ENCODE measurements at regions of chr5 and their contacts with region 1.

Region 1: DNA sequence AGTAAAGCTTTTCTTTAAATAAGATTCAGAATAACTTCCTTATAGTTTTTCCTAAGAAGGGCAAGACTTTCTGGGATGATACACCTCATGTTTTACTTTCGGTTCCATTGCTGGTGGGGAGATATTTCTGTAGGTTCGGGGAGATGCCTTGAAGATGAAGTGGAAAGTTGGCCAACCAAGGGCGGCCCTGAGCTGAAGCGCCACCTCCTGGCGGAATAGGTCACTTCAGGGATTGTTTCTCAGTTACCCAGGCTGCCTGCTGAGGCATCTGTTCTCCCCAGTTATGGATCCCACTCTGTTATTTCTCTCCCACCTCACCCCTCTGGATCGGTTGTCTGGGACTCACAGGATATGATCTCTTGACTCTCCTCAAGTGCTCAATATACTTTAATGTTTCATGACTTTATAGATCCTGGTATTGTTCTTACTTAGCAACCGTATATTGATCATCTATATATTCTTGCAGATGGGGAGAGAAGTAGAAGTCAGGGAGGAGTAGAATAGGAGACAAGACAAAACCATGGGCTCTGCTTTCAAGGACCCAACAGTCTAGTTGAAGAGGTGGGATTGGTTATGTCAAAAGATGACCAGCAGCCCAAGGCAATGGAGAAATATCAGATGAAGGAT is 23.4 kb downstream of the MEGF10 start:
- DNase-seq: peak; percentile 87
- H3K4me3 ChIP-seq: no peak overlapping the region
- H3K27ac ChIP-seq: no peak overlapping the region
- H3K4me1 ChIP-seq: peaks cover 0 to 11% (median 0%) of the 10 kb centered on the region in 6 donors
- H3K27me3 ChIP-seq: no peaks in the 10 kb centered on the region
- CTCF ChIP-seq: peak; percentile 26 to 82 (median 71)
- POLR2A ChIP-seq: no peak

Region 2: DNA sequence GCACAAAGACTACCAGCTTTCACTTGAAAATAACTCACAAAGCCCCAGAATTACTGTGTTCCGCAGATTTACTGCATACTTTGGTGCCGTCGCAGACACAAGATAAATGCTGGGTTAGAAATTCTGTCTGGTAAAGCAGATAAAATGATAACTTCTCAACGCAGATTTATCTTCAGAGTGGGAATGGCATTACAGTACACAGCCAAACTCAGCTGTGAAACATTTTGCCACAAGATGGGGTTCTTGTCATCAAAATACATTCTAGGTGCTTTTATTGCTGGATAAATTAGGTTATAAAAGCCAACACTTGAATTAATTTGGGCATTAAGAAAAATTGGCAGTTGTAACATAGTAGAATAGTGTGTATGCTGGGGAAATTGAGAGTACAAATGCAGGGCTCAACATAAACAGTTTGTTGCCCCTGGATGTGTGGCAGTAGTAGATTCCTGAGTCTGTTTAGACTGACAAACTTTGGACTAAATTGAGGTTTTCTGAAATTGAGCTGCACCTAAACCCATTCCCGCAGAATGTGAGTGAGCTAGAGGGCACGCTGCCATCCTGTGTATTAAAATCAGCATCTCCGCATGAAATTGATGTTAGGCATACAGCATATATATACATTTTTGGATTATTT is 475.9 kb before region 1 on chr5:
- intact Hi-C with region 1: loop called (anchors 10 kb)
- DNase-seq: no peak
- H3K4me3 ChIP-seq: no peak overlapping the region
- H3K27ac ChIP-seq: no peak overlapping the region
- H3K4me1 ChIP-seq: no peaks in the 10 kb centered on the region
- H3K27me3 ChIP-seq: no peaks in the 10 kb centered on the region
- CTCF ChIP-seq: peak in 8 of 11 experiments; percentile 27 to 57 (median 40)
- POLR2A ChIP-seq: no peak

Region 3: GRCh38 chr5:127040796-127041520 is 273.0 kb before region 1 on chr5:
- intact Hi-C with region 1: no loop called
- DNase-seq: no peak
- H3K4me3 ChIP-seq: no peak overlapping the region
- H3K27ac ChIP-seq: no peak overlapping the region
- H3K4me1 ChIP-seq: peaks cover 0 to 8% (median 4%) of the 10 kb centered on the region in 6 donors
- H3K27me3 ChIP-seq: no peaks in the 10 kb centered on the region
- CTCF ChIP-seq: no peak
- POLR2A ChIP-seq: no peak

Region 4: DNA sequence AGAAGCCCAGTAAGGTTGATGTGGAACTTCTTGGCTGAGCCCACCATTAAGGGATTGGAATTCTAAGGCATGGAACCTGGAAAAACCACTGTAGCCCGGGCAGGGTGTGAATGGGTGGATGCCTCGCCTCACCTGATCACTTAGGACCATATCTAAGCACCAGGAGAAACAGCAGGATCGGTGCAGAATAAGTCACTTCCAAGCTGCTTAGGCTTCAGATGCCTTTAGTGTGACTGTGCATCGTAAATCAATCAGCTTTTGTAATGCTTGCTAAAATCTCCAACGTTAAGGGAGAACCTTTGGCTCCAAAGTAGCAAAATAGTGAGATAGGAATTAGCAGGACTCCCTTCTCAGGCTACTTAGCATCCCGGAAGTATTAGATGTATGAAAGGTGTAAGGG is 127.3 kb before region 1 on chr5:
- intact Hi-C with region 1: no loop called
- DNase-seq: no peak
- H3K4me3 ChIP-seq: no peak overlapping the region
- H3K27ac ChIP-seq: no peak overlapping the region
- H3K4me1 ChIP-seq: no peaks in the 10 kb centered on the region
- H3K27me3 ChIP-seq: no peaks in the 10 kb centered on the region
- CTCF ChIP-seq: no peak
- POLR2A ChIP-seq: no peak